ENCODE measurements at regions of chr11 and their contacts with region 1.

Region 1: GRCh38 chr11:8964324-8965320 is at the start of gene TMEM9B:
- DNase-seq: peak; percentile 62
- ATAC-seq: peak; percentile 89
- H3K4me3 ChIP-seq: peak within 1 kb of the TSS; percentile 83
- H3K27ac ChIP-seq: peak within 1 kb of the TSS; percentile 92
- H3K4me1 ChIP-seq: peaks cover 5% of the 10 kb centered on the region
- H3K27me3 ChIP-seq: no peaks in the 10 kb centered on the region
- CTCF ChIP-seq: no peak
- EP300 ChIP-seq: no peak; a peak in 1 of 4 replicates
- POLR2A ChIP-seq: peak; percentile 87
- RAD21 ChIP-seq: no peak
- polyA plus RNA-seq, gene TMEM9B: 11.5 to 16.6 TPM

Region 2: GRCh38 chr11:8225589-8226036 is 739.0 kb before region 1 on chr11:
- CTCF ChIA-PET with region 1: interaction called, 3 read pairs
- POLR2A ChIA-PET with region 1: no interaction called
- RAD21 ChIA-PET with region 1: interaction called, 3 read pairs
- SMC1A ChIA-PET with region 1: no interaction called
- in situ Hi-C with region 1: no loop called
- intact Hi-C with region 1: loop called (anchors 10 kb)
- DNase-seq: no peak
- ATAC-seq: peak; percentile 87
- H3K4me3 ChIP-seq: no peak overlapping the region
- H3K27ac ChIP-seq: no peak overlapping the region
- H3K4me1 ChIP-seq: no peaks in the 10 kb centered on the region; the same call in 1 of the 2 replicates
- H3K27me3 ChIP-seq: no peaks in the 10 kb centered on the region
- CTCF ChIP-seq: peak; percentile 88 to 95 (median 90)
- EP300 ChIP-seq: no peak
- POLR2A ChIP-seq: no peak
- RAD21 ChIP-seq: peak; percentile 85

Region 3: GRCh38 chr11:8682303-8683114 is 282.1 kb before region 1 on chr11 and contains the starts of genes RPL27A and TRIM66:
- CTCF ChIA-PET with region 1: interaction called, 9 read pairs
- POLR2A ChIA-PET with region 1: interaction called, 10 read pairs
- RAD21 ChIA-PET with region 1: interaction called, 7 read pairs
- SMC1A ChIA-PET with region 1: interaction called, 6 read pairs
- in situ Hi-C with region 1: loop called (anchors 5 kb)
- intact Hi-C with region 1: no loop called
- DNase-seq: peak; percentile 82
- ATAC-seq: peak; percentile 94
- H3K4me3 ChIP-seq: peak within 1 kb of the TSS; percentile 88
- H3K27ac ChIP-seq: peak within 1 kb of the TSS; percentile 99
- H3K4me1 ChIP-seq: peaks cover 21% of the 10 kb centered on the region
- H3K27me3 ChIP-seq: no peaks in the 10 kb centered on the region
- CTCF ChIP-seq: no peak
- EP300 ChIP-seq: no peak
- POLR2A ChIP-seq: peak; percentile 97
- RAD21 ChIP-seq: no peak
- polyA plus RNA-seq, gene RPL27A: 978 to 2,052 TPM
- polyA plus RNA-seq, gene TRIM66: 1.7 to 2.4 TPM

Region 4: DNA sequence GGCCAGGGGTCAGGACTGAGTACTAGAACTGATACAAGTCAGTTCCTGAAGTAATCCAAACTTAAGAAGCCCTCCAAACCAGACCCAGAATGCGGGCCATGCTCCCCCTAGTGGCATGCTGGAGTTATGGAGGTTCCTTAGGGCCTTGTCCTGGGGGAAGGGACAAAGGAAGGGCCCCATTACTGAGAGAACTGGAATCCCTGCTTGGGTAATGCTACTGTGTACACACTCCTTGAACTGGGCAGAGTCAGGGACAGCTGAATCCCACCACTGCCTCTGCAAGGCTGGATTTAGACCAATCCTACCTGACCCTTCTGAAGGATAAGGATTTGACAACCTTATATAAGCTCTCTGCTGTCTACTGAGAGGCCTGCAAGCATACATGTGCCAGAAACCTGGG is 151.0 kb before region 1 on chr11:
- CTCF ChIA-PET with region 1: interaction called, 17 read pairs
- POLR2A ChIA-PET with region 1: no interaction called
- RAD21 ChIA-PET with region 1: interaction called, 3 read pairs
- SMC1A ChIA-PET with region 1: interaction called, 16 read pairs
- in situ Hi-C with region 1: no loop called
- intact Hi-C with region 1: loop called (anchors 5 kb)
- DNase-seq: no peak
- ATAC-seq: peak; percentile 94
- H3K4me3 ChIP-seq: no peak overlapping the region
- H3K27ac ChIP-seq: no peak overlapping the region
- H3K4me1 ChIP-seq: peaks cover 4% of the 10 kb centered on the region
- H3K27me3 ChIP-seq: peaks cover 0 to 2% of the 10 kb centered on the region in 2 experiments; a peak in 2 of 4 replicates
- CTCF ChIP-seq: peak; percentile 80 to 96 (median 89)
- EP300 ChIP-seq: no peak
- POLR2A ChIP-seq: no peak
- RAD21 ChIP-seq: peak; percentile 87

Region 5: DNA sequence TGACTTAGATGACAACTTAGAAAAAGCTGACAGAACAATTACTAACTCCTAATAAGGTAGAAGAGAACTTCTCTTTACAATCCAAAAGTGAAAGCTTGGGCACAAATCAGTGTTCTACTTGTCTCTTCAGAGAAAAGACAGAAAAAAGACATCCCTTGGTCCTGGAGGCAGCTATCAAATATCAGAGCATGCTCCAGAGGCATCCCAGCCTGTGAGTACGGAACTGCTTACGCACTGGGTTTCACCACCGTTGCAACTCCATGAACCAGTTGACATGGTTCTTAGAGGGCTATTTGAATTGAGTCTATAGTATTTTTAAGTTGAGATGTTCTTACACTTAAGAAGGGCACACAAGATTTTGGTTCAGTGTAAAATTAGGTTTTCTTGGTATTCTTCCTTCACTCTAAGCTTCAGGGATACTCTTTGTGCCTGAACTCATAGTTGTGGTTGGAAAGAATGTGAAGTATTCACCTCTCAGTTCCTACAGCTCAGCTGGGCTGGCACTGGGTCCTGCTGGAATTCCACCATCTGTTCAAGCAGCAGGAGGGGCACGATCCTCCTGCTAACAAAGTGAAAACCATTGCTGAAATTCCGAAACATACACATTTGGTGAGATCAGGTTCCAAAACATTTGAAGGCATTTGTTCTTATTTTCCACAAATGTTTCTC is 47.3 kb before region 1 on chr11:
- CTCF ChIA-PET with region 1: interaction called, 196 read pairs
- POLR2A ChIA-PET with region 1: interaction called, 10 read pairs
- RAD21 ChIA-PET with region 1: interaction called, 97 read pairs
- SMC1A ChIA-PET with region 1: interaction called, 77 read pairs
- in situ Hi-C with region 1: no loop called
- intact Hi-C with region 1: loop called (anchors 1 kb)
- DNase-seq: no peak
- ATAC-seq: no peak
- H3K4me3 ChIP-seq: no peak overlapping the region
- H3K27ac ChIP-seq: peak overlapping the region; percentile 21; the same call in 1 of the 2 replicates
- H3K4me1 ChIP-seq: peaks cover 16% of the 10 kb centered on the region
- H3K27me3 ChIP-seq: no peaks in the 10 kb centered on the region
- CTCF ChIP-seq: no peak
- EP300 ChIP-seq: no peak
- POLR2A ChIP-seq: no peak
- RAD21 ChIP-seq: no peak

Region 6: DNA sequence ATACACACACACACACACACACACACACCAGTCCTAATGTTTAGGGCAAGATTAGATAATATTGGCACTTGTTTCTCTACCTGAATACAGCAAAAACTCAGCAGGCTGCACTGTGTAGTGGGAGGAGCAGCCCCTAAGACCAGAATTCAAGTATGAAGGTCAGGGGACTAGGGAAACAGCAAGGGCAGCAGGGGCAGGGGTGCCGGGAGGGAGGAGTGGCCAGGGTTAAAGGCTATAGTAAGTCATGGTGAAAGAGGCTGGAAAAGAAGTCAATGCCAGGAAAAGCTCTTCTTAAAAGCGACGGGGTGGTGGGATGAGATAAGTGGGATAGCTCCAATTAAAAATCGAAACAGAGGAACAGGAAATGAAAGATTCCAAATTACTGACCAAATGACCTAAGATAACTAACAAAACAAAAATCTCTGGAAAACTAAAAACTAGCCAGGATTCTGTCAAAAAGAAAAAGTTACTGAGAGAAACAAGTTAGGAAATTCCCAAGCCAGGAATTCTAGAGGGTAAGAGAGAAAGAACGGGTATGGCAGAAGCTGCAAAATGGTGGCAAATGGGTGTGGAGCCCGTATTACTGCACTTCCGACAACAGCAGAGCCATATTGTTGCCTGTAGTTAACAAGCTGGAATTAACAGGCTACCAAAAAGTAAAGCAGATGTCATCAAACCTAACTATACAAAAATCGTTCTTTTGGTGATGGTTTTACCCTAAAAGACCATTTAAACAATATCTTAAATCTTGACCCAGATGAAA is 23.1 kb before region 1 on chr11:
- CTCF ChIA-PET with region 1: interaction called, 57 read pairs
- POLR2A ChIA-PET with region 1: no interaction called
- RAD21 ChIA-PET with region 1: interaction called, 7 read pairs
- SMC1A ChIA-PET with region 1: interaction called, 9 read pairs
- in situ Hi-C with region 1: no loop called
- intact Hi-C with region 1: no loop called
- DNase-seq: no peak
- ATAC-seq: no peak
- H3K4me3 ChIP-seq: no peak overlapping the region
- H3K27ac ChIP-seq: no peak overlapping the region
- H3K4me1 ChIP-seq: no peaks in the 10 kb centered on the region
- H3K27me3 ChIP-seq: no peaks in the 10 kb centered on the region
- CTCF ChIP-seq: no peak
- EP300 ChIP-seq: no peak
- POLR2A ChIP-seq: no peak
- RAD21 ChIP-seq: no peak

Region 7: DNA sequence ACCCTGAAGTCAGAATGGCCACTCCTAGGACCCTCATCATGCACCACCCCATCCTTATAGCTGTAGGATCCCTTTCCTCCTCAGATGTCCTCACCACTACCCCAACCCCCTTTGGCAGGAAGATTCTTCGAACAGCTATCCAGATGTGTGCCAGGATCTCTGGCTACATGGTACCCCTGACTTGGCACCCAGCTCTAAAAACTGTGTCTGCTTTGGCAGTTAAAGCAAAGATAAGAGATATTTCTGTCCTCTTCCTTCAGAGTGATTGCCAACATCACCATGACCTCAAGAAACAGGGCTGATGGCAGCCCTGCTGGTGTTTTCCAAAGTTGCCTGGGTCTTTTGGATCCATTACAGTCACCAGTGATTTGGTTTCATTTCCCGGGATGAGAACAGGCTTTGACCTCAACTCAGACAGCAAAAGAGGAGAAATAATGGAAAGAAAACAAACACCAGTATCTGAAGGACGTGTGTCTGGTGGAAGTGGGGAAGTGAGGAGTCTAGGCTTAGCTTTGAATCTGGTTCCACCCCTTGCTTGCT is 43.5 kb after region 1 on chr11:
- CTCF ChIA-PET with region 1: no interaction called
- POLR2A ChIA-PET with region 1: no interaction called
- RAD21 ChIA-PET with region 1: no interaction called
- SMC1A ChIA-PET with region 1: no interaction called
- in situ Hi-C with region 1: no loop called
- intact Hi-C with region 1: no loop called
- DNase-seq: no peak
- ATAC-seq: no peak
- H3K4me3 ChIP-seq: no peak overlapping the region
- H3K27ac ChIP-seq: no peak overlapping the region
- H3K4me1 ChIP-seq: peaks cover 6% of the 10 kb centered on the region; the same call in 1 of the 2 replicates
- H3K27me3 ChIP-seq: peaks cover 4 to 11% of the 10 kb centered on the region in 2 experiments
- CTCF ChIP-seq: no peak
- EP300 ChIP-seq: no peak
- POLR2A ChIP-seq: no peak
- RAD21 ChIP-seq: no peak

Region 8: GRCh38 chr11:9060700-9061111 is 96.1 kb after region 1 on chr11:
- CTCF ChIA-PET with region 1: interaction called, 5 read pairs
- POLR2A ChIA-PET with region 1: interaction called, 5 read pairs
- RAD21 ChIA-PET with region 1: interaction called, 3 read pairs
- SMC1A ChIA-PET with region 1: interaction called, 8 read pairs
- in situ Hi-C with region 1: no loop called
- intact Hi-C with region 1: loop called (anchors 5 kb)
- DNase-seq: peak; percentile 97
- ATAC-seq: peak; percentile 99
- H3K4me3 ChIP-seq: no peak overlapping the region
- H3K27ac ChIP-seq: no peak overlapping the region
- H3K4me1 ChIP-seq: peaks cover 16% of the 10 kb centered on the region
- H3K27me3 ChIP-seq: no peaks in the 10 kb centered on the region
- CTCF ChIP-seq: peak; percentile 41 to 47 (median 46); a peak in 4 of 6 replicates
- EP300 ChIP-seq: peak; percentile 92 to 98
- POLR2A ChIP-seq: no peak
- RAD21 ChIP-seq: no peak; the same call in 1 of the 2 replicates

Region 9: GRCh38 chr11:9384535-9385303 is 420.1 kb after region 1 on chr11 and contains the start of gene IPO7:
- CTCF ChIA-PET with region 1: no interaction called
- POLR2A ChIA-PET with region 1: no interaction called
- RAD21 ChIA-PET with region 1: no interaction called
- SMC1A ChIA-PET with region 1: no interaction called
- in situ Hi-C with region 1: no loop called
- intact Hi-C with region 1: no loop called
- DNase-seq: peak; percentile 60
- ATAC-seq: peak; percentile 97
- H3K4me3 ChIP-seq: peak within 1 kb of the TSS; percentile 97
- H3K27ac ChIP-seq: peak within 1 kb of the TSS; percentile 91
- H3K4me1 ChIP-seq: peaks cover 3% of the 10 kb centered on the region; the same call in 1 of the 2 replicates
- H3K27me3 ChIP-seq: no peaks in the 10 kb centered on the region
- CTCF ChIP-seq: peak in 2 of 3 experiments; percentile 10 to 13; a peak in 1 of 6 replicates
- EP300 ChIP-seq: 0 out of 4 replicates have a peak, but pooled peaks of 1 of the 2 experiments have one; percentile 20
- POLR2A ChIP-seq: peak; percentile 99
- RAD21 ChIP-seq: no peak
- polyA plus RNA-seq, gene IPO7: 9.2 to 9.9 TPM

Measured in GM12878 (cell line).